ENCODE measurements at regions of chr7 and their contacts with region 1.

Region 1: DNA sequence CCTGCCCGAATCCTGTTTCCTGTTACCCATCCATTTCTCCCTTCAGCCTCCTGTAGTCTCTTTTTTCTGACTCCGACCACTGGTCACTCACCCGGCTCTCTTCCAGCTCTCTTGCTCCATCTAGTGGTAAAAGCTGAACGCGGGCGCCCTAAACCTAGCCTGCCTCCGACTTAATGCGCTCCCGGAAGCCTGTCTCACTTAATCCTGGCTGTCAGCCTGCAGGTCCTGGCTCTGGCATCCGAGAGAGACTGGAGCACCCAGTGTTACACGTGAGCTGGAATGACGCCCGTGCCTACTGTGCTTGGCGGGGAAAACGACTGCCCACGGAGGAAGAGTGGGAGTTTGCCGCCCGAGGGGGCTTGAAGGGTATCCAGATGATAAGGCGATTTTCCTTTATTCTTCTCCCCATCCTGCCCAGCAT is 10.3 kb downstream of the SUMF2 start:
- DNase-seq: peak in 34 of 35 experiments; percentile 10 to 75 (median 47)
- ATAC-seq: peak; percentile 82 to 89 (median 82)
- H3K4me3 ChIP-seq: no peak overlapping the region
- H3K4me3 Mint-ChIP-seq: no peak overlapping the region
- H3K27ac ChIP-seq: no peak overlapping the region
- H3K27ac Mint-ChIP-seq: no peak overlapping the region
- H3K4me1 ChIP-seq: peaks cover 0 to 8% of the 10 kb centered on the region in 2 experiments
- H3K4me1 Mint-ChIP-seq: peaks cover 5 to 7% (median 6%) of the 10 kb centered on the region in 3 donors
- H3K27me3 ChIP-seq: no peaks in the 10 kb centered on the region
- H3K27me3 Mint-ChIP-seq: no peaks in the 10 kb centered on the region

Region 2: DNA sequence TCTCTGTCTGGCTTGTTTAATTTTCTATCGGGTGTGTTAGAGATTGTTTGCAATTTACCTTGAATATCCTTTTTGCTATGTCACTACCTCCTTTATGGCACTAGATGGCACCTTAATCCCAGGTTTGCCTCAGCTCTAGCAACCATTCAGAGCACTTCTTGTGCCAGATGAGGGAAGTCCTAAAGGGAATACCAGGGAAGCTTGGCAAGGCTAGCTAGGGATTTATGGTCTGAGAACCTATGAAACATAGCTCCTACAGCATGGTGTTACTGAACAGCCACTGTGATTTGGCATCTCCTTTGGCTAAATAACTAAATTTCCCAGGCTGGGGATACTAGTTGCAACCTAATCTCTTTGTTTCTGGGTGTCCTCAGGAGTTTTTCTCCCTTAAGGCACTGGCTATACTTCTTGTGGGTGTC is 433.1 kb before region 1 on chr7:
- CTCF ChIA-PET with region 1: interaction called, 8 to 21 read pairs
- POLR2A ChIA-PET with region 1: interaction called in 1 of 2 experiments, 3 read pairs
- DNase-seq: peak in 23 of 35 experiments; percentile 1 to 80 (median 16)
- ATAC-seq: peak; percentile 76 to 87 (median 84)
- H3K4me3 ChIP-seq: no peak overlapping the region
- H3K4me3 Mint-ChIP-seq: peak overlapping the region in 1 of 3 donors; percentile 42
- H3K27ac ChIP-seq: no peak overlapping the region
- H3K27ac Mint-ChIP-seq: no peak overlapping the region
- H3K4me1 ChIP-seq: peaks cover 3 to 8% of the 10 kb centered on the region in 2 experiments
- H3K4me1 Mint-ChIP-seq: peaks cover 10 to 13% (median 11%) of the 10 kb centered on the region in 3 donors
- H3K27me3 ChIP-seq: no peaks in the 10 kb centered on the region
- H3K27me3 Mint-ChIP-seq: peaks cover 0 to 2% of the 10 kb centered on the region in 2 donors

Region 3: DNA sequence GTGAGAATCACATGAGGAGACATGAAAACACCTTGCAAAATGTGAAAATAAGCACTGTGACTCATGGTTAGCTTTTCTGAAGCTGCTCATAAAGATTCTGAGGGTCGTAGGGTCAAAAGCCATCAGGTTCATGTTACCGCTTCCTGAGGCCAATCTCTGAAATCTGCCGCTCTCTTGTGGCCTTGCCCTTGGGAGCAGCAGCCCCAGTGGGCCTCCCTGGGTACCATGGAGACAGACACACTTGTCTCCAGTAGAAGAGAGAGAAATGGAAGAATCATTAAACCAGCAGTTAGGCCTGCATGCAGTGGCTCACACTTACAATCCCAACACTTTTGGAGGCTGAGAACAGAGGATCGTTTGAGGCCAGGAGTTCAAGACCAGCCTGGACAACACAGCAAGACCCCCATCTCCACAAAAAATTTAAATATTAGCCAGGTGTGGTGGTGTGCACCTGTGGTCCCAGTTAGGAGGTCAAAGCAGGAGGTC is 67.2 kb before region 1 on chr7:
- CTCF ChIA-PET with region 1: interaction called, 4 to 32 read pairs
- POLR2A ChIA-PET with region 1: no interaction called
- DNase-seq: no peak
- ATAC-seq: no peak
- H3K4me3 ChIP-seq: no peak overlapping the region
- H3K4me3 Mint-ChIP-seq: no peak overlapping the region
- H3K27ac ChIP-seq: no peak overlapping the region
- H3K27ac Mint-ChIP-seq: no peak overlapping the region
- H3K4me1 ChIP-seq: no peaks in the 10 kb centered on the region
- H3K4me1 Mint-ChIP-seq: no peaks in the 10 kb centered on the region
- H3K27me3 ChIP-seq: no peaks in the 10 kb centered on the region
- H3K27me3 Mint-ChIP-seq: no peaks in the 10 kb centered on the region

Region 4: GRCh38 chr7:56026538-56026937 is 47.8 kb before region 1 on chr7:
- CTCF ChIA-PET with region 1: interaction called in 1 of 2 experiments, 12 read pairs
- POLR2A ChIA-PET with region 1: no interaction called
- DNase-seq: no peak
- ATAC-seq: no peak
- H3K4me3 ChIP-seq: no peak overlapping the region
- H3K4me3 Mint-ChIP-seq: no peak overlapping the region
- H3K27ac ChIP-seq: no peak overlapping the region
- H3K27ac Mint-ChIP-seq: no peak overlapping the region
- H3K4me1 ChIP-seq: no peaks in the 10 kb centered on the region
- H3K4me1 Mint-ChIP-seq: no peaks in the 10 kb centered on the region
- H3K27me3 ChIP-seq: no peaks in the 10 kb centered on the region
- H3K27me3 Mint-ChIP-seq: no peaks in the 10 kb centered on the region

Region 5: DNA sequence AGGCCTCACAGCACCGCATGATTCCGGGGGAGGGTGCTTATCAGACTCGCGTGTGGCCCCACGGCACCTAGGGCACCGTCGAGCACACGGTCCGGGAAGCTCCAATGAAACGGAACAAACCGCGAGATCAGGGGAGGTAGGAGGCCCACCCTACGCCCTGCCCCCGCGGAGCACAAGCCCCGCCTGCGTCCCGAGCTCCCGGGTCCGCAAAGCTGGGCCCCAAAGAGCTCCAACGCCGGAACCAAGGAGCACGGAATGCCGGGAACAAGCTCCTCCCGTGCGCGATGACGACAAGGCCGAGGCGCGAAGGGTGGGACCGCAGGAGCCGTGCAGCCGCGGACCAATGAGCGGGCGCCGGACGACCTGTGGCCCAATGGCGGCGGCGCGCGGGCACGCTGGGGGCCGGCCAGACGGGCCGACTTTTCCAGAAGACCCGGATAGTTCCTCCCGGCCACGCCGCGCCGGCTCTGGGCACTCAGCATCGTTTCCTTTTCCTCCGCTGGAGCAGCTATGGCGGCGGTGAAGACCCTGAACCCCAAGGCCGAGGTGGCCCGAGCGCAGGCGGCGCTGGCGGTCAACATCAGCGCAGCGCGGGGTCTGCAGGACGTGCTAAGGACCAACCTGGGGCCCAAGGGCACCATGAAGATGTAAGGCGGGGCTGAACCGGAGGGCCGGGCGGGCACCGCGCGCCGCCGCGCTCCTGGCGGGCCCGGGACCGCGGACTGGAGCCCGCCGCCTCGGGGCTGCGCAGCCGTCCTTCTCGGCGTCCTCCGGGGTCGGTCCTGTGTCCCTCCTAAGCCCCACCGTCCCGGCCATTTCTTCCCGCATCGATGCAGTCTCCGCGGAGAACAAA is 22.8 kb before region 1 on chr7 and contains the starts of genes CCT6A and PSPH:
- CTCF ChIA-PET with region 1: interaction called, 6 to 11 read pairs
- POLR2A ChIA-PET with region 1: interaction called, 3 read pairs
- DNase-seq: peak; percentile 68 to 94 (median 78)
- ATAC-seq: peak; percentile 93 to 97 (median 96)
- H3K4me3 ChIP-seq: peak within 1 kb of the TSS; percentile 70 to 89
- H3K4me3 Mint-ChIP-seq: peak within 1 kb of the TSS; percentile 87 to 93 (median 92)
- H3K27ac ChIP-seq: peak within 1 kb of the TSS; percentile 40
- H3K27ac Mint-ChIP-seq: peak within 1 kb of the TSS; percentile 86 to 92
- H3K4me1 ChIP-seq: peaks cover 11 to 31% of the 10 kb centered on the region in 2 experiments
- H3K4me1 Mint-ChIP-seq: peaks cover 38 to 43% (median 39%) of the 10 kb centered on the region in 3 donors
- H3K27me3 ChIP-seq: no peaks in the 10 kb centered on the region
- H3K27me3 Mint-ChIP-seq: no peaks in the 10 kb centered on the region
- total RNA-seq, gene CCT6A: 44.6 to 74.7 (median 70.3) TPM
- total RNA-seq, gene PSPH: 1.9 to 8.3 (median 5.7) TPM

Region 6: GRCh38 chr7:56063882-56064625 is 10.3 kb before region 1 on chr7 and contains the start of gene SUMF2:
- CTCF ChIA-PET with region 1: interaction called, 11 to 16 read pairs
- POLR2A ChIA-PET with region 1: interaction called, 4 to 10 read pairs
- DNase-seq: peak; percentile 75 to 95 (median 87)
- ATAC-seq: peak; percentile 89 to 91 (median 90)
- H3K4me3 ChIP-seq: peak within 1 kb of the TSS; percentile 76 to 98
- H3K4me3 Mint-ChIP-seq: peak within 1 kb of the TSS; percentile 92 to 95 (median 92)
- H3K27ac ChIP-seq: peak within 1 kb of the TSS; percentile 84
- H3K27ac Mint-ChIP-seq: peak within 1 kb of the TSS; percentile 94 to 96
- H3K4me1 ChIP-seq: peaks cover 7 to 21% of the 10 kb centered on the region in 2 experiments
- H3K4me1 Mint-ChIP-seq: peaks cover 28 to 31% (median 29%) of the 10 kb centered on the region in 3 donors
- H3K27me3 ChIP-seq: no peaks in the 10 kb centered on the region
- H3K27me3 Mint-ChIP-seq: no peaks in the 10 kb centered on the region
- total RNA-seq, gene SUMF2: 127 to 182 (median 174) TPM

Measured in T-cell (primary cell).